Activated B cell treated with CpG ODN at 0.5 μM for 24 hours (primary cell): ENCODE measurements at regions of chr22 and their contacts with region 1.

Region 1: GRCh38 chr22:46280999-46281623 is 13.3 kb downstream of the TTC38 start:
- DNase-seq: no peak
- ATAC-seq: peak; percentile 76
- H3K4me3 Mint-ChIP-seq: no peak overlapping the region
- H3K27ac Mint-ChIP-seq: no peak overlapping the region
- H3K4me1 Mint-ChIP-seq: peaks cover 21% of the 10 kb centered on the region
- H3K27me3 Mint-ChIP-seq: no peaks in the 10 kb centered on the region
- CTCF ChIP-seq: no peak

Region 2: DNA sequence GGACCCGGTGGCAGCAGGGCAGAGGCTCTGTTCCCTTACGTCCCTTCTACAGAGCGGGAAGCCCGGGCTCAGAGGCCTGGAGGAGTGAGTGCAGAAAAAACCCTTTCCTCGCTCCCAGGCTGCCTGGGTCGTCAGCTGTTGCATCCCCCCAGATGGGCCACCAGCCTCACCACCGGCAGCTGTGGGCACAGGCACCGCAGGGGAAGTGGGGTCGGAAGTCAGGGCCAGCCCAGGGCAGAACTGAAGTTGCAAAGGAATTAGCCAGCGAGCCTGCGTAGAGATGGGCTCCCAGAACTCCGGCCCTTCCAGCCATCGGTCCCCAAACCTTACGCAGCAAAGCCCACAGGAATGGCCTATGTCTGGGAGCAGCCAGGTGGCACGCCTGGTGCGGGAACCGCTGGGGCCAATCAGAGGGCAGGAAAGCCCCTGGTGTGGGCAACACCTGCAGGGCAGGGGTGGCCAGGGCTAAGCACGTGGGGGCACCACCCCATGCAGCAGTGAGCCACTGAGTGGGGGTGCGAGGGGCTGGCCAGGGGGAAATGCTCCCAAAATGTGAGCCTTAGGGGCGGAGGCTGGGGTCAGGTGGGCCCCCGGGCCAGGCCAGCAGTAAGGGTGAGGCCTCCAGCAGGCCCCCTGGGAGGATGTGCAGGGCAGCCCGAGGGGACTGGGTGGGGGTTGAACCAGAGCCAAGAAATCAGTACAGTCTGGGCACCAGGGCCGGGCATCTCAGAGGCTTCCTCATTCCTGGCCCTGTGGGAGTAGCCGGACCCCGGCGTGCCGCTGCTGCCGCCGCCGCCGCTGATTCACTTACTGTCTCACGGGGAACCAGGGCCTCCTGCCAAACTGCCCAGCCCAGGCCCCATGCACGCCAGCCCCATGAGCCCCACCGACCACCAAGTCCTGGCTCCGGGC is 362.4 kb before region 1 on chr22:
- CTCF ChIA-PET with region 1: no interaction called
- POLR2A ChIA-PET with region 1: no interaction called
- intact Hi-C with region 1: no loop called
- DNase-seq: no peak
- ATAC-seq: no peak
- H3K4me3 Mint-ChIP-seq: no peak overlapping the region
- H3K27ac Mint-ChIP-seq: no peak overlapping the region
- H3K4me1 Mint-ChIP-seq: no peaks in the 10 kb centered on the region
- H3K27me3 Mint-ChIP-seq: peaks cover 7% of the 10 kb centered on the region
- CTCF ChIP-seq: no peak

Region 3: DNA sequence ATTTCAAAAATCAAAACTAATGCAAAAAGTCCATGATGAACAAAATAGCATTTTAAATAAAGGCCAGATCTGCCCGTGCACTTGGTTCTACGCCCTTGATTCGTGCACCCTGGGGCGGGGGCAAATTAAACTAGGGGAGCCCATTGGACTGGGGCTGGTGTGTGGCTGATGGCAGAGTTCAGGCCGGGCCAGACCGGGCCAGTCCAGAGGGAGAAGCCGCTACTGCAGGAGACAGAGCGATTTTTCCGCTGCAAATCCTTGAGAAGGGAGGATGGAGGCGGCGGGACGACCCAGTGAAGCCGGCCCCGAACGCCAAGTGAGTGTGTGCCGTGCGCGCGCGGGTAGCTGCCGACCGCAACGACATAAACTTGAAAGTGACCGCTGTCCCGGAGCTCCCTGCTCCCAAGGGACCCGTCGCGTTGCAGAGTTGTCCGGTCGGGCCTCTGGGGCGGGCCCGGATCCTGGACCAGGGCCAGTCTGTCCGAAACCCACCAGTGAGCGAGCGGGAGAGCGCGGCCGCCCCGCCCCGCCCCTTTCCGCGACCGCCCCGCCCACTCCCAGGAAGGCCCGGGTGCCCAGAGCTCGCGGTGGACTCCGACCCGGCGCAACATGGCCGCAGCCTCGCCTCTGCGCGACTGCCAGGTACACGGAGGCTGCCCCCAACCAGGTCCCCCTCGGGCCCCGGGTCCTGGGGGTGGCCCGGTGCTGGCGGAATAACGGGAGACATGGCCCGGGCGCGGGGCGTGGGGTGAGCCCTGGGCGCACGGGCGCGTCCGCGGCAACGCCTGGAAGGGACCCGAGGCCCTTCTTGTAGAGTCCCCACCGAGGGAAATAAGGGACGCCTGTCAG is 13.5 kb before region 1 on chr22 and contains the start of gene TTC38:
- CTCF ChIA-PET with region 1: no interaction called
- POLR2A ChIA-PET with region 1: no interaction called
- intact Hi-C with region 1: loop called (anchors 1 kb)
- DNase-seq: peak; percentile 57
- ATAC-seq: peak; percentile 91
- H3K4me3 Mint-ChIP-seq: peak within 1 kb of the TSS; percentile 91
- H3K27ac Mint-ChIP-seq: peak within 1 kb of the TSS; percentile 66
- H3K4me1 Mint-ChIP-seq: peaks cover 15% of the 10 kb centered on the region
- H3K27me3 Mint-ChIP-seq: peaks cover 19% of the 10 kb centered on the region
- CTCF ChIP-seq: no peak
- total RNA-seq, gene TTC38: 9.8 and 11.8 TPM in 2 replicates